Left cardiac atrium (tissue), 4 donors: ENCODE measurements at regions of chr13 and their contacts with region 1.

Region 1: DNA sequence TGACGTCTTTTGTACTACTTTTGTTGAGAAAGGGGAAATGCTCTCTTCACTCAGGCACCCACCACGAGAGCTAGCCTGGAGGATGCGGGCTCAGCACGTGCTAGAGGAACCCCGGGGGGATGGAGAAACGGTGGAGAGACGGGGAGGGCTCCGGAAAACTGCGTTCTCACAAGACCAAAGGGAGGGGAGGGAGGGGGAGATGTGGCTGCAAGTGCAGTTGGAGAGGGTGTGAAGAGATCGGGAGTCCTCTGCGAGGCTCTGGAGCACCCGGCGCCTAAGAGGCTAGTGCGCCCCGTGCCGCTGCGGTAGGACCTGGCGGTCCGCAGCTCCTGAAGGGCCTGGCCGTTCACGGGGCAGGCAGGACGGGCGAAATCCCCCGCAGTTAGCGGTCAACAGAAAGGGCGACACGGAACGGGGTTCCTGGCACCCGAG is 43.4 kb upstream of the XPO4 start:
- DNase-seq: peak; percentile 29
- ATAC-seq: peak in 1 of 2 donors; percentile 26

Region 2: GRCh38 chr13:20843166-20843565 is 102.8 kb before region 1 on chr13:
- intact Hi-C with region 1: no loop called
- DNase-seq: no peak
- ATAC-seq: peak; percentile 62 to 76

Region 3: DNA sequence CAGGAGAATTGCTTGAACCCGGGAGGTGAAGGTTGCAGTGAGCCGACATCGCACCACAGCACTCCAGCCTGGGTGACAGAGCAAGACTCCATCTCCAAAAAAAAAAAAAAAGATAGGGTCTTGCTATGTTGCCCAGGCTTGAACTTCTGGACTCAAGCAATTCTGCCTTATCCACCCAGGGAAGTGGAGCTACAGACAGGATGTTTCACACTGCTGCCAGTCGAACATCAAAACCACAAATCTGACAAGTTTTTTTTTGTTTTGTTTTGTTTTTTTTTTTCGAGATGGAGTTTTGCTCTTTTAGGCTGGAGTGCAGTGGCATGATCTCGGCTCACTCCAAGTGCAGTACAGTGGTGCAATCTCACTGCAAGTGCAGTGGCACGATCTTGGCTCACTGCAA is 54.2 kb before region 1 on chr13:
- intact Hi-C with region 1: no loop called
- DNase-seq: no peak
- ATAC-seq: no peak

Region 4: DNA sequence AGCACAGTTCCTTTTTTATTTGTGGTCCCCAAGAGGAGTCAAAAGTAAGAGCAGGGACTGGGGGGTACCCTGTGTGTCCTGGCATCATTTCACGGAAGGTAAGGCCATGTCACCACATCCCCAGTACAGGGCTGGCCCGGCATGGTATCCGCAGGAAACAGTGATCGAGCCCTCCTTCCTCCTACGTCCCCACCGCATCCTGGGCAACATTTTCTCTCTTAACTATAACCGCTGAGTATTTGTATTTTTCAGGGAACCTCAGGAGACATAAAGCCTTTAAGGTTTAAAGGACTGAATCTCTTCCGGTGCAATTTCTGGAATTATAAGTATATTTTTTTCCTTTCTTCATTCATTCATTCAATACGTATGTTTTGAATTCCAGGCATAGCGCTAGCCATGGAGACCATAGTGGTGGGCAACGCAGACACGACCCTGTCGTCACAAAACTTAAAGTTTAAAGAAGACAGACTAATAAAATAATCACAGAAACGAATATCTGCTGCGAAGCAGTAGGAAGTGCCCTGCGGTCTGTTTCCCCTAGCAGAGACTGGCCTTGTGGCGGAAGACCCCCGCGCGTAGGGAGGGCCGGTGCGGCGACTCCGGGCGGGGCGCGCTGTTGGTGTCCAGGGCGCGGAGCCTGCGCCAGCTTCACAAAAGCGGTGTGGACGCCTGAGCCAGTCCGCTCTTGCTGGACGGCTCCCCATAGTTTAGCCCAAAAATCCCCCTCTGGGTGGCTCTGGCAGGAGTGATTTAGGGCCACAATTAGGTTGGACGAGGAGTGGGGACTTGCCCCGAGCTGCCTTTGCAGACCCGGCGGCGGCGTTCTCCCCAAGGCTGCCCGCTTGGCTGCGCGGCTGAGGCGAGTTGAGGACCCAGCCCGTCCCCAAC is 129.3 kb after region 1 on chr13:
- intact Hi-C with region 1: loop called in 1 of 2 experiments (anchors 10 kb)
- DNase-seq: peak; percentile 43
- ATAC-seq: peak; percentile 68 to 70

Region 5: GRCh38 chr13:21176220-21176982 is 230.4 kb after region 1 on chr13 and contains the starts of genes MRPL57 and SKA3:
- intact Hi-C with region 1: loop called in 1 of 2 experiments (anchors 10 kb)
- DNase-seq: peak; percentile 94
- ATAC-seq: peak; percentile 98
- total RNA-seq, gene MRPL57: 18.8 to 20.1 TPM
- total RNA-seq, gene SKA3: 0.24 to 1.1 TPM